ENCODE measurements at regions of chr3 and their contacts with region 1.

Region 1: GRCh38 chr3:129278439-129278970 is at the start of gene HMCES:
- DNase-seq: peak; percentile 91 to 95 (median 94)
- H3K4me3 ChIP-seq: peak within 1 kb of the TSS; percentile 96
- H3K4me3 Mint-ChIP-seq: peak within 1 kb of the TSS; percentile 94 to 99 (median 98)
- H3K27ac ChIP-seq: peak within 1 kb of the TSS; percentile 94
- H3K27ac Mint-ChIP-seq: peak within 1 kb of the TSS; percentile 96 to 99 (median 98)
- H3K4me1 ChIP-seq: peaks cover 26% of the 10 kb centered on the region
- H3K4me1 Mint-ChIP-seq: peaks cover 32 to 50% (median 38%) of the 10 kb centered on the region in 3 donors
- H3K27me3 ChIP-seq: no peaks in the 10 kb centered on the region
- H3K27me3 Mint-ChIP-seq: peaks cover 0 to 3% of the 10 kb centered on the region in 2 donors
- total RNA-seq, gene HMCES: 64.3 to 64.6 TPM

Region 2: DNA sequence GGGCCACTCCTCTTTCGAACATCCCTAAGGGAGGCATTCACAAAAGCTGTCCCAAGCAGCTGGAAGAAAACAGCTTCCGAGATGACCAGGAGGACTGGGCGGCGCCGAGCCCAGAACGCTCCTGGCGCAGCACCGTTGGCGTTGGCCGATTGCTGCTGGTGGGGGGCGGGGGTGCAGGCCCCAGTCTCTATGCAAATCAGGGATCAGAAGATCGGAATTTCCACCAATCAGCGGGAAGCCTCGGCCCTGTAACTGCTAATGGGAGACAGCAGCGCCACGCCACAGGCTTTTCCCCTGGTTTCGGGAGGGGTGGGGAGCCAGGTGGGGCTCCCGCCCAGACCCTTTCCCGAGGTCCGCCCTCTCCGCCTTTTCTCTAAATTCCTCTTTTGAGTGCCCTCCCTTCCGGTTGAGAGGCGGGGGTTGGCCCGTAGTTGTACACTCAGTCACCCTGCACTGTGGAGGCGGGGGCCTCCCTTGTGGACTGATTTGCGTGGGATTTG is 27.1 kb after region 1 on chr3:
- CTCF ChIA-PET with region 1: interaction called, 3 read pairs
- POLR2A ChIA-PET with region 1: interaction called, 14 read pairs
- DNase-seq: no peak
- H3K4me3 ChIP-seq: no peak overlapping the region
- H3K4me3 Mint-ChIP-seq: no peak overlapping the region
- H3K27ac ChIP-seq: no peak overlapping the region
- H3K27ac Mint-ChIP-seq: peak overlapping the region in 2 of 8 donors; percentile 54 to 70
- H3K4me1 ChIP-seq: no peaks in the 10 kb centered on the region
- H3K4me1 Mint-ChIP-seq: peaks cover 3 to 15% (median 12%) of the 10 kb centered on the region in 3 donors
- H3K27me3 ChIP-seq: no peaks in the 10 kb centered on the region
- H3K27me3 Mint-ChIP-seq: no peaks in the 10 kb centered on the region